HepG2 (cell line): ENCODE measurements at regions of chr21 and their contacts with region 1.

Region 1: DNA sequence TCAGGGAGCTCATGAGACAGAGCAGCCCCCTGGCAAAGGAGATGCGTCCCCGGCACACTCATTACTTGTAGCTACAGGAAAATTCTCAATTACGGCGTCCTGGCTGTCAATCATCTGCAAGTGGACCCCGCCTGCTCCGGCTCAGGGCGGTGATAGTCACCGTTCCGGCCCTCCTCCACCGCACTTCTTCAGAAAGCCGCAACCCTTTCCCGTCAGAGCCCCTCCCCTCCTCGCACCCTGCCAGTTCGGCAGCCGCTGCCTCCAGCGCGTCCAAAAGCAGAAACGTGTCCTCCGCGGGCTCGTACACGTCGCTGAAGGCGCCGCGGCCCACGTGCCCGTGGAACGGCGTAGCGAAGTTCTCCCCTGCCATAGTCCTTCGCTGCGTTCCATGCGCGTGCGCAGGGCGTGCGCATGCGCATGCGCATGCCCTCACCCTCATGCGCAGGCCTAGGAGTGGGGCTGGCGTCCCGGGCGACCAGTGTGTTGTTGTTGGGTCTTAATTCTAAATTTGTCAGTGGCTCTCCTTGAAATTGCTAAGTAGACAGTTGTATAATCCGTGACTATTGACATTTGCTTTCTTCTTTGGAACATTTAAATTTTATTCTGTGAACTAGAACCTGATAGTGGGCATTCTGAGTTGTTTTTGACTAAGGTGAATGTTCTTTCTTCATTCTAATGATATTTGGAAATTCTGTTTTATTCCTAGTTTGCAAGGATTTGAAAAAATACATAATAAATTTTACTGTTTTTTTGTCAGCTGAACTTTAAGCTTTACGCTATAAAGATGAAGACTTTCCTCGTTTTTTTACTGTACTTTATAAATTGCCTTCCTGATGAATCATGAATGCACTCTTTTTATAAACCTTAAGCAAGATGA is 107.5 kb downstream of the LTN1 start:
- DNase-seq: peak; percentile 82
- ATAC-seq: peak; percentile 99
- H3K4me3 ChIP-seq: peak overlapping the region; percentile 58 to 76 (median 65)
- H3K27ac ChIP-seq: peak overlapping the region; percentile 88
- H3K4me1 ChIP-seq: peaks cover 19% of the 10 kb centered on the region
- H3K27me3 ChIP-seq: no peaks in the 10 kb centered on the region; a peak in 1 of 5 replicates
- CTCF ChIP-seq: 0 out of 2 replicates have a peak, but pooled peaks have one; percentile 14
- EP300 ChIP-seq: no peak
- POLR2A ChIP-seq: peak; percentile 84 to 95
- RAD21 ChIP-seq: peak; percentile 37; the same call in 1 of the 2 replicates

Region 2: DNA sequence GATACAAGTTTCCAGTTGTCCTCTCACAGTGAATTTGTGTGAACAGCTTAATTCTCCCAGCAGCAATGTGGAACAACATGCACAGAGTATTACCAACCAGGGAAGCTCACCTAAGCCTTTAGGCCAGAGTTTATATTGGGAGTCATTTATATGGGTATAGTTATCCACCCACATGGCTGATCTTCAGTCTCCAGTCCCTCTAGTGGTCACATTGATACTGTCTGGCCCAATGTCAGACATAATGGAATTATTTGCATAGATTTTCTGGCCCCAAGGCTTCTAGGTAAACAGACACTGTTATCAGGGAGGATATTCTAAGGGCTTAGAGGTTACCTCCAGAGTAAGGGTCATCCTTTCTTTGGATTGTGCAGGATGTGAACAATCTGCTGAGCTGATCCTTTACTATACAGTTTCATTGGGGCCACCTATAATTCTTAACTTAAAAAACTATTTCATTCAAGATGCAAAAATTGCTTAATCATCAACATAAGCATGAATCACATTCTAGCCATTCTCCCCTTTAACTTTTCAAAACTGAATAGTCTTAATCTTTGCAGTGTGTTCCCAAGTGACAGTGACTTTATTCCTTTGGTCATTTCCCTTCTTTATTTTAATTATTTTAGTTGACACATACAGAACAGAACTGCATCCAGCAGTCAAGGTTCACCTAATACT is 103.5 kb before region 1 on chr21:
- CTCF ChIA-PET with region 1: no interaction called
- POLR2A ChIA-PET with region 1: no interaction called
- in situ Hi-C with region 1: no loop called
- intact Hi-C with region 1: no loop called
- DNase-seq: peak; percentile 4
- ATAC-seq: peak; percentile 79
- H3K4me3 ChIP-seq: no peak overlapping the region
- H3K27ac ChIP-seq: no peak overlapping the region
- H3K4me1 ChIP-seq: no peaks in the 10 kb centered on the region
- H3K27me3 ChIP-seq: no peaks in the 10 kb centered on the region
- CTCF ChIP-seq: peak; percentile 17; the same call in 1 of the 2 replicates
- EP300 ChIP-seq: no peak
- POLR2A ChIP-seq: no peak
- RAD21 ChIP-seq: no peak

Region 3: DNA sequence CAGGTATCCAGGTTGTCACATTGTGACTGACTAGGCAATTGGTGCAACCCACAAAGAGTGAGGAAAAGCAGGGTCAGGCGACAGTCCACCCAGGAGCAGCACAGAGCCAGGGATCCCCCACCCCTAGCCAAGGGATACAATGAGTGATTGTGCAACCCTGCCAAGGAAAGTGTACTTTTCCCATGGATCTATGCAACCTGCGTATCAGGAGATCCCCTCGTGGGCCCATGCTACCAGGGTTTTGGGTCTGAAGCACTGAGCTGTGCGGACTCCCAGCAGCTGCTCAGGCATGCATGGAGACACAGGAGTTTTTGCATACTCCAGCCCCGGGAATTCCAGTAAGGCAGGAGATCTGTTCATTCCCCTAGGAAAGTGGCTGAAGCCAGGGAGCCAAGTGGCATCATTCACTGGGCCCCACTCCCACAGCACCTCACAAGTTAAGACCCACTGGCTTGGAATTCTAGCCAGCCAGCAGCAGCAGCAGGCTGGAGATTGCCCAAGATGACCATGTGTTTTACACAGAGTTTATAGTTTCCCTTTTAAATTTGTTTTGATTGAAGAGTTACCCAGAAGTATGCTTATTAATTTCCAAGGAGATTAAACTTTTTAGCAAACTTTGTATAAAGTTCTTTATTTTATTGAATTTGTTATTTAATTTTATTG is 28.5 kb before region 1 on chr21:
- CTCF ChIA-PET with region 1: no interaction called
- POLR2A ChIA-PET with region 1: interaction called, 4 read pairs
- in situ Hi-C with region 1: no loop called
- intact Hi-C with region 1: loop called (anchors 2 kb)
- DNase-seq: peak; percentile 53
- ATAC-seq: peak; percentile 80
- H3K4me3 ChIP-seq: peak overlapping the region in 1 of 3 experiments; percentile 2; a peak in 1 of 6 replicates
- H3K27ac ChIP-seq: peak overlapping the region; percentile 45
- H3K4me1 ChIP-seq: peaks cover 23% of the 10 kb centered on the region
- H3K27me3 ChIP-seq: no peaks in the 10 kb centered on the region
- CTCF ChIP-seq: no peak
- EP300 ChIP-seq: no peak
- POLR2A ChIP-seq: no peak
- RAD21 ChIP-seq: no peak

Region 4: DNA sequence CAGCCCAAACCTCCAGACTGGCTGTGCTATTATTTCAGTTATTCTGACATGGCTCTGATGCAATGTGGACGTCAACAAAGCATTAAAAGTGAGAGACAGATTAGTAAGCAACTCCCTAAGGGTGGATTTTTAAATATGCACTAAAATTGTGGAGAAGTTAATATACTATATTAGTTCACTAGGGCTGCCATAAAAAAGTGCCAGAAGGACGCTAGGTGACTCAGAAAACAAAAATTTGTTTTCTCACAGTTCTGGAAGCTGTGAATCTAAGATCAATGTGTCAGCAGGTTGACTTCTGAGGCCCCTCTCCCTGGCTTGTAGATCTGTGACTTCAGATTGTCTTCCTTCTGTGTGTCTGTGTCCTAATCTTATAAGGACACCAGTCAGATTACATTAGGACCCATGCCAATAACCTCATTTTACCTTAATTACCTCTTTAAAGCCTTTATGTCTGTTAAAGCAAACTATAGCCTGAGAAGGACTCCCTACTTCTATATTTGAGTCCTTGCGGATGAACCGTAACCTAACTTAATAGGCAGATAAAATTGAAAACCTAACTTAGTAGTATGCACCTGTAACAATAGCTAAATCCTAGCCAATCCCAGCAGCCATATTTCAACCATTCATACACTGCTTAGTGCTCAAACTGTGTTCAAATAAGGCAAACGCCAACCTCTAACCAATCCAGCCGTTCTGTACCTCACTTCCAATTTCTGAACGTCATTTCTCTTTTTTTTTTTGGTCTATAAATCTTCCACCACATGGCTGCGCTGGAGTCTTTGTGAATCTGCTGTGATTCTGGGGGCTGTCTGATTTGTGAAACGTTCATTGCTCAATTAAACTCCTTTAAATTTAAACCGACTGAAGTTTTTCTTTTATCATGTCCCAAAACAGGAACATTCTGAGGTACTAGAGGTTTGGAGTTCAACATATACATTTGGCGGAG is 347.7 kb after region 1 on chr21:
- CTCF ChIA-PET with region 1: no interaction called
- POLR2A ChIA-PET with region 1: no interaction called
- in situ Hi-C with region 1: no loop called
- intact Hi-C with region 1: no loop called
- DNase-seq: no peak
- ATAC-seq: no peak
- H3K4me3 ChIP-seq: no peak overlapping the region
- H3K27ac ChIP-seq: no peak overlapping the region
- H3K4me1 ChIP-seq: no peaks in the 10 kb centered on the region
- H3K27me3 ChIP-seq: peaks cover 0 to 3% of the 10 kb centered on the region in 2 experiments; a peak in 2 of 5 replicates
- CTCF ChIP-seq: no peak
- EP300 ChIP-seq: no peak
- POLR2A ChIP-seq: no peak
- RAD21 ChIP-seq: no peak